ENCODE measurements at regions of chr6 and their contacts with region 1.

Region 1: GRCh38 chr6:154805288-154805911 is 72.2 kb downstream of the SCAF8 start:
- DNase-seq: no peak
- ATAC-seq: no peak
- H3K4me3 ChIP-seq: no peak overlapping the region
- H3K27ac ChIP-seq: no peak overlapping the region
- H3K4me1 ChIP-seq: no peaks in the 10 kb centered on the region
- H3K27me3 ChIP-seq: no peaks in the 10 kb centered on the region

Region 2: DNA sequence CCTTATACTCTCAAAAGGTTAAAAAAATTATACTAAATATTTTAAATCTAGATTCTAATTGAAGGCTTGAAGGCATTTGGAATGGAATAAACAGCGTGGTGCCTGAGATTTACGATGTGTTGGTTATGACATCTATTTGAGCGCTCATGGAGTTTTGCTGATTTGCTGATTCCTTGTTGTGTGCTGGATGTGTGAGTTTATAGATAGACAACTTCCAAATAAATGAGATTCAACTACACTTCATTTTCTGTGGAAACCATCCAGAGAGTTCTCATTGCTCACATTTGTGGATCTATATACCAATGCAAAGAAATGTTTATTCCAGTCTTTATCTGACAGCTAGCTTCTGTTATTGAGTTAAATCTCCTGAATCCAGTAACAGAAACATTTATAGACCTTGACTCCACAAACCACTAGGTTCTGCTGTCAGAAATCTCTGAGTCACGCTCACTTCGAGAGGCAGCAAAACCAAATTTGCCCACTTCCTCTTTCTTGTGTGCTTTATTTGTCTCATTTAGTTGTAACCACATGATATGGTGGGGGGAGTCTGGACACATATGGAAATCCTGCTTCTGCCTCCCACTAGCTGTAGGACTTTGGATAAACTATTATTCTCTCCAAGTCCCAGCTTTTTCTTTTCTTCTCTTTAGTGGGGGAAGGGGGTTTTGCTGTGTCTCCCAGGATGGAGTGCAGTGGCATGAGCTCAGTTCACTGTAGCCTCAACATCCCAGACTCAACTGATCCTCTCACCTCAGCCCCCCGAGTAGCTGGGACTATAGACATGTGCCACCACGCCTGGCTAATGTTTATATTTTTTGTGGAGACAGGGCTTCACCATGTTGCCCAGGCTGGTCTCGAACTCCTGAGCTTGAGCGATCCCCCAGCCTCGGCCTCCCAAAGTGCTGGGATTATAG is 503.3 kb before region 1 on chr6:
- intact Hi-C with region 1: no loop called
- DNase-seq: no peak
- ATAC-seq: no peak
- H3K4me3 ChIP-seq: no peak overlapping the region
- H3K27ac ChIP-seq: no peak overlapping the region
- H3K4me1 ChIP-seq: peaks cover 2% of the 10 kb centered on the region
- H3K27me3 ChIP-seq: no peaks in the 10 kb centered on the region

Region 3: DNA sequence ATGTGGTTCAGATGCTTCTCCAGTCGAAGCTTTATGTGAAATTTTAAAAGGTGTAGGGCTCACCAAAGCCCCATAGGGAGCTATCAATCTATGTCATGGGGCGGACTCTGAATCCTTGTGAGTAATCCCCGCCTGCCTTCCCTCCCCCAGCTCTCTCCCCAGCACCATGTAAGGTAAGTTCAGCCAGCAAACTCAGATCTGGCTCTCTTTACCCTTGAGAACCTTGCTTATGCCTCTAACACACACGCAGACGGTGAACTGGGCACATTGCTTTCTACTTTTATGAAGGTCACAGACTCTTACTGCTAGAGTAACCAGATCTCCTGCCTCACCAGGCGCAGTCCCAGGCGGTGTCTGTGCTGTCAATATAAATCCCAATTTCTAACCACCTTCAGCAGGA is 212.3 kb before region 1 on chr6:
- intact Hi-C with region 1: no loop called
- DNase-seq: peak in 1 of 3 donors; percentile 55
- ATAC-seq: peak; percentile 79 to 89
- H3K4me3 ChIP-seq: no peak overlapping the region
- H3K27ac ChIP-seq: peak overlapping the region; percentile 69
- H3K4me1 ChIP-seq: peaks cover 3% of the 10 kb centered on the region
- H3K27me3 ChIP-seq: no peaks in the 10 kb centered on the region

Region 4: DNA sequence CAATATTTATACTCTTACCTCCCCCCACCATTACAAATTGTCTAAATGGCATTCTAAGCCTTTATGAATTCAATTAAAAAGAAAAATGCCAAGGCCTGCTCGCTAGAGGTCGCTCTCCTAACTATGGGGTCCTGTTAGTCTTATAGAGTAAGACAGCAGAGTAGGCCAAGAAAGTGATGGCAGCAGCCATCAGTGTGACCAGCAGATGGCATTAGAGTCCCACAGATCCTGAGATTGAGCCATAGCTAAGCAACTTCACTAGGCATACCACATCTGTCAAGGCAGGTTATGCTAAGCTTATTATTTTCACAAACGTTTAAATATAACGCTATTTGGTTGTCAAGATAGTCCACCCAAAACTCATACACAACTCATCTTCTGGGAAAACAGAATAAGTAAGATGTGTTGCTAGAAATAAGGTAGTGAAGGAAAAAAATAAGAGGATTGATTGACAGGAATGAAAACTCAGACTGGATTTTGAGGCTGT is 129.8 kb before region 1 on chr6:
- intact Hi-C with region 1: loop called (anchors 5 kb)
- DNase-seq: peak; percentile 83 to 93 (median 87)
- ATAC-seq: peak; percentile 97 to 98
- H3K4me3 ChIP-seq: no peak overlapping the region
- H3K27ac ChIP-seq: no peak overlapping the region
- H3K4me1 ChIP-seq: no peaks in the 10 kb centered on the region
- H3K27me3 ChIP-seq: no peaks in the 10 kb centered on the region

Region 5: DNA sequence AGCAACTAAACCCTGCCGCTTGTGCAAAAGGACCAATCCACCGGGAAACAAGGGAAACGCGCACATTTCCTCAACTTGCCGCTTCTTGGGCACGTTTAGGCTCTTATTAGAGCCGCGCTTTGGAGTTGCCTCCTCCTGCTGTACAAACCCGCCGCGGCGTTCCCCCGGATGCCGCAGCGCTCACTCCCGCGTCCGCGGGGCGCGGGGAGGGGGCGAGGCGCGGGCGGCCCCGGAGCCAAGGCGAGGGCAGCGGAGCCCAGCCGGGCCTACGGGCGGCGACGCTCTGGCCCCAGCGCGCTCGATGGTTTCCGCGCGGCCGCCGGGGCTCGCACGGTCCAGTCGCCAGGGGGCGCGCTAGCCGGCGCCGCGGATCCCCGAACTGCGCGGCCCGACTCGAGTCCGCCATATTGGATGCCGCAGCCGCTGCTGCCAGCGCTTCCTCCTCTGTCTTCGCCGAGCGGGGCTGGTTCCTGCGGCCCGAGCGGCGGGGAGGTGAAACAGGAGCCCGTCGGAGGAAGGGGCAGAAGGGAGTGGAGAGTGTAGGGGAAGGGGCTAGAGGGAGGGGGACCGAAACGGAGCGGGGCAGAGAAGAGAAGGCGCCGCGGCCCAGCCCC is 72.3 kb before region 1 on chr6 and contains the start of gene SCAF8:
- intact Hi-C with region 1: loop called in 2 of 4 experiments (anchors 5 kb)
- DNase-seq: peak; percentile 82 to 94 (median 93)
- ATAC-seq: peak; percentile 86 to 90
- H3K4me3 ChIP-seq: peak within 1 kb of the TSS; percentile 86
- H3K27ac ChIP-seq: peak within 1 kb of the TSS; percentile 99
- H3K4me1 ChIP-seq: peaks cover 10% of the 10 kb centered on the region
- H3K27me3 ChIP-seq: no peaks in the 10 kb centered on the region
- total RNA-seq, gene SCAF8: 40.4 to 46.4 (median 44.3) TPM

Region 6: DNA sequence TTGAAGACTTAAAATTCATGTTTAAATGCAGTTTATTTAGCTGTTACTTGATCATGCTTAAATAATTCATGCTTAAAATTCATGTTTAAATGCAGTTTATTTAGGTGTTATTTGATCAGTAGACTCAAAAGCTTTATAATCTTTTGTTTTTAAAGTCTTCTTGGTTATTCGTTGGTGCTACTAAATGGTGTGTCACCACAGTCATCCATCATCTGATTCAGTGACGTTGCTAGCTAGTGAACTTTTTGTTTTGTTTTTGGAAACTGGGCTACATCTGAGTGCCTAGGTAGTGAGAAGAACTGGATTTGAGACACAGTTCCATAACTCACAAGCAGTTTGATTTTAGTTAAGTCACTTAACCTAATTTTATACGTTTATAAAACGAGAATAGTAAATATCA is 51.2 kb before region 1 on chr6:
- intact Hi-C with region 1: loop called in 1 of 4 experiments (anchors 10 kb)
- DNase-seq: no peak
- ATAC-seq: no peak
- H3K4me3 ChIP-seq: no peak overlapping the region
- H3K27ac ChIP-seq: no peak overlapping the region
- H3K4me1 ChIP-seq: peaks cover 3% of the 10 kb centered on the region
- H3K27me3 ChIP-seq: no peaks in the 10 kb centered on the region

Region 7: DNA sequence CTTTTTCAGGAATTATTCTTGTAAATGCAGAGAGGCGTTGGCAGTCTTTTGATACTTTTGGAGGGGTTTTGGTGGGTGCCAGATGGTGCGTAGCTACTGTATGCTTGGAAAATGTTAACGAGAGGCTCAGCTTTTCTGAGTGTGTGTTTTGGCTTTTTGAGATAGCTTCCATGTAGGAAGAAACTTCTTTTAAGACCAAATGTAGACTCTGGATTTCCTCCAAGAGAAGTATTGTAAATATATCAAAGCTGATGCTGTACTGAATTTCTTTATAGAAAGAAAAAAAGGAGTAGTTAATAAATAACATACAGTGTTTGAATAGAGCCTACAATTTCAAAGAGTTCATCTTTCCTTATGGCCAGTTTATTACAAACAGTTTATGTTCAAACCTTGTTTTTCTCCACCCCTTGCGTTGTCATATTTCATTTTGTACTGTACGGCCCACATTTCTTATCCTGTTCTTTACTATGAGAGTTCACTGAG is 206.4 kb after region 1 on chr6:
- intact Hi-C with region 1: no loop called
- DNase-seq: no peak
- ATAC-seq: no peak
- H3K4me3 ChIP-seq: no peak overlapping the region
- H3K27ac ChIP-seq: no peak overlapping the region
- H3K4me1 ChIP-seq: no peaks in the 10 kb centered on the region
- H3K27me3 ChIP-seq: no peaks in the 10 kb centered on the region

Measured in right cardiac atrium (tissue), 5 donors.